Endothelial cell of umbilical vein (primary cell): ENCODE measurements at regions of chr15 and their contacts with region 1.

Region 1: DNA sequence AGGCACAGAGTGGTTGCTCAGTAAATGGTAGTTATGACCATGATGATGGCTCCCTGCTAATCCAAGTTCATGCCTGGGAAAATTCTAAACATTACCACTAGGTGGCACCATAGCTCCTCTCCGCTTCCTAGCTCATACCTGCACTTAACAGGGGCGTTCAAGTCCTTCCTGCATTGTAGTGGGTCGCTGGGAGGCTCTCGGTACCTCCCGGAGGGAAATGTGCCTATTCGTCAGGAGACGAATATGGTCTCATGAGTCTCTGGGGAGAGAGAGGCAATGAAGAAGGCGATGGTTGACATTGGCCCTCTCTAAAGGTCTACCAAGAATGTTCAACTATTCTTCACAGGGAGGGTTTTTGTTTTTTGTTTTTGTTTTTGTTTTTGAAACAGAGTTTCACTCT is 10.9 kb downstream of the MESP1 start:
- DNase-seq: peak; percentile 86
- H3K4me3 ChIP-seq: no peak overlapping the region
- H3K27ac ChIP-seq: no peak overlapping the region
- H3K4me1 ChIP-seq: no peaks in the 10 kb centered on the region
- H3K27me3 ChIP-seq: peaks cover 3 to 4% of the 10 kb centered on the region in 2 experiments
- CTCF ChIP-seq: peak; percentile 75 to 77
- POLR2A ChIP-seq: no peak

Region 2: DNA sequence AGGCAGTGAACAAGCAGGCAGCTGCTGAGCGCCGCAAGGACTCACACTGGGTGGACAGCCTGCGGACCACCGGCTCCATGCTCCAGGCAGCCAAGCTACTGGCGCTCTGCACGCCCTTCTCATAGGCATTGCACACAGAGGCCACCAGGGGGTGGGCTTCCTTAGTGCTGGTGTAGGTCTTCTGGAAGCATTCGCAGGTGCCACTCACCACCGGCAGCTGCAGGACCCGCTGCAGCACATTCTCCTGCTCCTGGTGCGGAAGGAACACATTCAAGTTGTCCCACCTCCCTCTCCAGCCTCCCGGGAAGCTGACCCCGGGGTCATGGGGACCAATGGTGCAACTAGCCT is 67.0 kb before region 1 on chr15:
- CTCF ChIA-PET with region 1: interaction called, 12 read pairs
- POLR2A ChIA-PET with region 1: no interaction called
- dilution Hi-C with region 1: no loop called
- intact Hi-C with region 1: no loop called
- DNase-seq: peak; percentile 37
- H3K4me3 ChIP-seq: no peak overlapping the region
- H3K27ac ChIP-seq: no peak overlapping the region
- H3K4me1 ChIP-seq: no peaks in the 10 kb centered on the region
- H3K27me3 ChIP-seq: peaks cover 0 to 1% of the 10 kb centered on the region in 2 experiments
- CTCF ChIP-seq: peak; percentile 51 to 79
- POLR2A ChIP-seq: no peak

Region 3: DNA sequence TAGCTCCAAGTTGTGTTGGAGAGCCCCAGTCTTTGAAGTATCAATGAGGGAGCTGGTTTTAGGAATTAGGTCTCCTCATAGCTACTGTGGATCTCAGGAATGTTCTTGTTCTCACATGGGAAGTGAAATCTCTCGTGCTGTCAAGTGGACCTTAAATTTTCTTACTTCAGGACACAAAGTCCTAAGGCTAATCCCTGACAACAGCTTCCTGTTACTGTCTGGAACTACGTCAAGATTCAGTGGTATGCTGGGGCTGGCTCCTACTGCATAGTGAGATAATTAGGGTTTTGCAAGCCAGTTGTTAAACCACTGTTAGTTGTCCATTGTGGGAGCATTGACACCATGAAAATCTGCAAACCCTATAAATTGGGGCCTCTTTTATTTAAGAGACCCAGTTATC is 11.9 kb before region 1 on chr15:
- CTCF ChIA-PET with region 1: interaction called, 27 read pairs
- POLR2A ChIA-PET with region 1: no interaction called
- dilution Hi-C with region 1: no loop called
- intact Hi-C with region 1: no loop called
- DNase-seq: no peak
- H3K4me3 ChIP-seq: no peak overlapping the region
- H3K27ac ChIP-seq: no peak overlapping the region
- H3K4me1 ChIP-seq: no peaks in the 10 kb centered on the region
- H3K27me3 ChIP-seq: peaks cover 16 to 19% of the 10 kb centered on the region in 2 experiments
- CTCF ChIP-seq: no peak
- POLR2A ChIP-seq: no peak

Region 4: GRCh38 chr15:89750560-89751542 is 10.7 kb after region 1 on chr15 and contains the start of gene MESP1:
- CTCF ChIA-PET with region 1: interaction called, 29 read pairs
- POLR2A ChIA-PET with region 1: no interaction called
- dilution Hi-C with region 1: no loop called
- intact Hi-C with region 1: no loop called
- DNase-seq: peak; percentile 91
- H3K4me3 ChIP-seq: peak within 1 kb of the TSS; percentile 38 to 48 (median 46)
- H3K27ac ChIP-seq: no peak within 1 kb of the TSS
- H3K4me1 ChIP-seq: peaks cover 6% of the 10 kb centered on the region
- H3K27me3 ChIP-seq: peaks cover 3 to 12% of the 10 kb centered on the region in 2 experiments
- CTCF ChIP-seq: peak; percentile 66 to 90
- POLR2A ChIP-seq: peak; percentile 42
- total RNA-seq, gene MESP1: 1.0 and 1.7 TPM in 2 replicates

Region 5: DNA sequence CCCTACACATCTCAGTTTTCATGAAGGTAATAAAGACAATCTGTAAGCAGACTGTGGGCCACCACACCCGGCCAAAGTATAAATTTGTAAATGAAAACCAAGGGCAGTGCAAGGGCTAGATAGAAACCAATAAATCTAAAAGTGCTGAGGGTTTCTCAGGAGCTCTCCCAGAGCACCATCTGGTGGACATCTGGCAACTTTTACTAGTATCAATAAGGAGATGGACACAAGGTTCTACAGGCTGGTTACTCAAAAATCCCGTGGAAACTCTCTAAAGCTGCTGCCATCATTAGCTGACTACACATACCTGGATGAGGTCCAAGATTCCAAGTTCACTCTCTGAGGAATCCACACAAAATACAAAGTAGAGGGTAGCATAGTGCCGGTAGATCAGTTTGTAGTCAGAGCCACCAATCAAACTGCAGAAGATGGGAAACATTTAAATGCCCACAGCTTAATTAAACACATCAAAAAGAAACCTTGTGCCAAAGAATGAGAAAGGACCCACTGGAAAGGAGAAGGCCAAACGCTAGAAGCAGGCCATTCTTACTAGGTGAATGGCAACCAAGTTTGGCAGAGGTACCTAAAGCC is 148.2 kb after region 1 on chr15:
- CTCF ChIA-PET with region 1: interaction called, 99 read pairs
- POLR2A ChIA-PET with region 1: no interaction called
- dilution Hi-C with region 1: no loop called
- intact Hi-C with region 1: loop called (anchors 1 kb)
- DNase-seq: peak; percentile 56
- H3K4me3 ChIP-seq: no peak overlapping the region
- H3K27ac ChIP-seq: no peak overlapping the region
- H3K4me1 ChIP-seq: peaks cover 5% of the 10 kb centered on the region
- H3K27me3 ChIP-seq: no peaks in the 10 kb centered on the region
- CTCF ChIP-seq: peak; percentile 38 to 55
- POLR2A ChIP-seq: no peak

Region 6: GRCh38 chr15:90086868-90087268 is 346.7 kb after region 1 on chr15:
- CTCF ChIA-PET with region 1: interaction called, 17 read pairs
- POLR2A ChIA-PET with region 1: no interaction called
- dilution Hi-C with region 1: no loop called
- intact Hi-C with region 1: loop called (anchors 1 kb)
- DNase-seq: peak; percentile 50
- H3K4me3 ChIP-seq: no peak overlapping the region
- H3K27ac ChIP-seq: no peak overlapping the region
- H3K4me1 ChIP-seq: no peaks in the 10 kb centered on the region
- H3K27me3 ChIP-seq: no peaks in the 10 kb centered on the region
- CTCF ChIP-seq: peak; percentile 83 to 91
- POLR2A ChIP-seq: no peak

Region 7: GRCh38 chr15:90099868-90100831 is 360.0 kb after region 1 on chr15:
- CTCF ChIA-PET with region 1: no interaction called
- POLR2A ChIA-PET with region 1: no interaction called
- dilution Hi-C with region 1: no loop called
- intact Hi-C with region 1: no loop called
- DNase-seq: no peak
- H3K4me3 ChIP-seq: no peak overlapping the region
- H3K27ac ChIP-seq: no peak overlapping the region
- H3K4me1 ChIP-seq: peaks cover 18% of the 10 kb centered on the region
- H3K27me3 ChIP-seq: no peaks in the 10 kb centered on the region
- CTCF ChIP-seq: no peak
- POLR2A ChIP-seq: no peak